ENCODE measurements at regions of chr10 and their contacts with region 1.

Region 1: GRCh38 chr10:86936661-86937501 is 20.5 kb downstream of the MMRN2 start:
- DNase-seq: peak in 1 of 35 experiments; percentile 21
- ATAC-seq: no peak
- H3K4me3 ChIP-seq: no peak overlapping the region
- H3K4me3 Mint-ChIP-seq: no peak overlapping the region
- H3K27ac ChIP-seq: no peak overlapping the region
- H3K27ac Mint-ChIP-seq: no peak overlapping the region
- H3K4me1 ChIP-seq: peaks cover 0 to 8% of the 10 kb centered on the region in 2 experiments
- H3K4me1 Mint-ChIP-seq: peaks cover 0 to 2% (median 2%) of the 10 kb centered on the region in 3 donors
- H3K27me3 ChIP-seq: peaks cover 0 to 3% of the 10 kb centered on the region in 2 experiments
- H3K27me3 Mint-ChIP-seq: no peaks in the 10 kb centered on the region

Region 2: GRCh38 chr10:85557077-85557476 is 1379.8 kb before region 1 on chr10:
- CTCF ChIA-PET with region 1: no interaction called
- POLR2A ChIA-PET with region 1: no interaction called
- DNase-seq: no peak
- ATAC-seq: no peak
- H3K4me3 ChIP-seq: no peak overlapping the region
- H3K4me3 Mint-ChIP-seq: no peak overlapping the region
- H3K27ac ChIP-seq: no peak overlapping the region
- H3K27ac Mint-ChIP-seq: no peak overlapping the region
- H3K4me1 ChIP-seq: no peaks in the 10 kb centered on the region
- H3K4me1 Mint-ChIP-seq: no peaks in the 10 kb centered on the region
- H3K27me3 ChIP-seq: no peaks in the 10 kb centered on the region
- H3K27me3 Mint-ChIP-seq: no peaks in the 10 kb centered on the region

Region 3: DNA sequence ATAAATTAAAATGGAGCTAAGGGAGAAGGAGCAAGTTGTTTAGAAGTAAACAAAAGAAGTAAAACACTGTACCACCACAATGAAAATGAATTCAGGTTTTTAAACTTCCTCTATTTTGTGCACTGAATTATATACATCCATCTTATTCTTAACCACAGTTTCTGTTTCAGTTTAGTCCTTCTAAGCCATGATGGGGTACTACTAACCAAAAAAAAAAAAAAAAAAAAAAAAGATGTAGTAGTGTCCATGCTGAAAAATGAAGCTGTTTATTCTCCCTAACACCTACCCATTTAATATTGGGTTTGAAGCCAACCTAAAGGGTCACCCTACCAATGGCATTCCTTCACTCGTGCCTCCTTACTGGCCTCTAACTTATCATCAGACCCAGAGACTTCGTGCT is 183.8 kb before region 1 on chr10:
- CTCF ChIA-PET with region 1: interaction called, 4 to 12 read pairs
- POLR2A ChIA-PET with region 1: no interaction called
- DNase-seq: no peak
- ATAC-seq: no peak
- H3K4me3 ChIP-seq: no peak overlapping the region
- H3K4me3 Mint-ChIP-seq: no peak overlapping the region
- H3K27ac ChIP-seq: no peak overlapping the region
- H3K27ac Mint-ChIP-seq: no peak overlapping the region
- H3K4me1 ChIP-seq: peaks cover 0 to 11% of the 10 kb centered on the region in 2 experiments
- H3K4me1 Mint-ChIP-seq: peaks cover 13 to 14% (median 13%) of the 10 kb centered on the region in 3 donors
- H3K27me3 ChIP-seq: peaks cover 3 to 10% of the 10 kb centered on the region in 2 experiments
- H3K27me3 Mint-ChIP-seq: peaks cover 0 to 4% of the 10 kb centered on the region in 2 donors

Region 4: GRCh38 chr10:86878983-86879713 is 57.7 kb before region 1 on chr10:
- CTCF ChIA-PET with region 1: no interaction called
- POLR2A ChIA-PET with region 1: no interaction called
- DNase-seq: no peak
- ATAC-seq: no peak
- H3K4me3 ChIP-seq: no peak overlapping the region
- H3K4me3 Mint-ChIP-seq: no peak overlapping the region
- H3K27ac ChIP-seq: no peak overlapping the region
- H3K27ac Mint-ChIP-seq: peak overlapping the region in 1 of 2 donors; percentile 32
- H3K4me1 ChIP-seq: no peaks in the 10 kb centered on the region
- H3K4me1 Mint-ChIP-seq: peaks cover 0 to 3% (median 3%) of the 10 kb centered on the region in 3 donors
- H3K27me3 ChIP-seq: no peaks in the 10 kb centered on the region
- H3K27me3 Mint-ChIP-seq: no peaks in the 10 kb centered on the region

Region 5: DNA sequence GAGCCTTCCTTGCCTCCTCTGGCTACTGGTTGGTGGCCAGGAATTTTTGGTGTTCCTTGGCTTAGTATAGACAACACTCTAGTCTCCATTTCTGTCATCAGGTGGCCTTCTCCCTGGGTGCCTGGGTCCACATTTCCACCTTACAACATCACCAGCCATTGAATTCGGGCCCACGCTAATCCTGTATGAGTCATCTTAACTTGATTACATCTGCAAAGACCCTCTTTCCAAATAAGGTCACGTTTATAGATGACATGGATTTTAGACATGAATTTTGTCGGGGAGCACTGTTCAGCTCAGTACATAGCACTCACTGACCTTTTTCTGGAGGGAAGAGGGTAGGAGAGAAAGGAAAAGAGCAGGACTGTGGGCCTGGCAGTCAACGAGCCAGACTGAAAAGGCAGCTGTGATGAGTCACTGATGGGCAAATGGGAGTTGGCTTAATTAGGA is 18.8 kb before region 1 on chr10:
- CTCF ChIA-PET with region 1: interaction called in 1 of 2 experiments, 10 read pairs
- POLR2A ChIA-PET with region 1: no interaction called
- DNase-seq: no peak
- ATAC-seq: no peak
- H3K4me3 ChIP-seq: no peak overlapping the region
- H3K4me3 Mint-ChIP-seq: no peak overlapping the region
- H3K27ac ChIP-seq: no peak overlapping the region
- H3K27ac Mint-ChIP-seq: no peak overlapping the region
- H3K4me1 ChIP-seq: no peaks in the 10 kb centered on the region
- H3K4me1 Mint-ChIP-seq: no peaks in the 10 kb centered on the region
- H3K27me3 ChIP-seq: no peaks in the 10 kb centered on the region
- H3K27me3 Mint-ChIP-seq: no peaks in the 10 kb centered on the region

Region 6: DNA sequence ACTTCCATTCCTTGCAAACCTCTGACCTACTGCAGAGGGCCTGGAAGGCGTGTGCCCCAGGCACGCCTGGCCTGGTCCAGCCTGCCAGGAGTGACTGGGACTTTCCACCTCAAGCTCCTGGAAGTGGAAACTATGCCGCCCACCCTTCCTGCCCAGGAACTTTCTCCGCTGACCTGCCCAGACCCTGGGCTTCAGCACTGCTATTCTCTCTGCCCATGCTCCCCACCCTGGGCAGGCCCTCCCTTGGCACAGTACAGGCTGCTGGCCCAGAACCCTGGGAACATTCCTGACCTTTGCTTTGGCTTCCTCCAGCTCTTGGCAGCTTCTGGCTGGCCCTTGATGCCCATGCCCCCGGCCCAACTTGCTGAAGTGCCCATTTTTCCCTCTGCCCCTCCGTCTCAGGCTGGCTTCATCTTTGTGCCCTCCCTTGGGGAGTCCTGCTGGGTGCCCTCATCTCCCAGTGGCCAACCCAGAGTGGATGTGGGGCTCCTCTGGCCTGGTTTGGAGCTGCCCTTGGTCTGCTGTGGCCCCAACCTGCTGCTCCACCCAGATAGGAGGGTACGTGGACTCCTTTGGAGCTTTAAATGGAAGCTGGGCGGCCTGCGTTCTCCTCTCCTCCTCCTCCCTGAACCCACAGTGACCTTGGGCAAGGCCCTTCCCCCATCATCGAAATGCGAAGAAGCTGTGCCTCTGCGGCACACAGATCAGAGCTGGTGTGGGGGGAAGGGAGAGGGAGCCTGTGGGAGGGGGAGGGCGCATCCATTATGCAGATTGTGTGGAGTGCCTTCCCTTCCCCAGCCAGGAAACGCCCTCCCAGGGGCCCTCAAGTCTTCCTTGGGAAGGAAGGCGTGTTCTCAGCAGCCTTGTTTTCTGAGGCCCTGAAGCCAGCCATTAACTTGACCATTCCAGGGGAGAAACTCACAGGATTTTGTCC is 17.1 kb after region 1 on chr10:
- CTCF ChIA-PET with region 1: interaction called, 8 to 10 read pairs
- POLR2A ChIA-PET with region 1: no interaction called
- DNase-seq: no peak
- ATAC-seq: no peak
- H3K4me3 ChIP-seq: no peak overlapping the region
- H3K4me3 Mint-ChIP-seq: no peak overlapping the region
- H3K27ac ChIP-seq: no peak overlapping the region
- H3K27ac Mint-ChIP-seq: no peak overlapping the region
- H3K4me1 ChIP-seq: peaks cover 14 to 37% of the 10 kb centered on the region in 2 experiments
- H3K4me1 Mint-ChIP-seq: peaks cover 9 to 25% (median 19%) of the 10 kb centered on the region in 3 donors
- H3K27me3 ChIP-seq: peaks cover 0 to 3% of the 10 kb centered on the region in 2 experiments
- H3K27me3 Mint-ChIP-seq: no peaks in the 10 kb centered on the region

Region 7: GRCh38 chr10:86965986-86966654 is 29.2 kb after region 1 on chr10:
- CTCF ChIA-PET with region 1: interaction called, 8 to 11 read pairs
- POLR2A ChIA-PET with region 1: no interaction called
- DNase-seq: peak in 1 of 35 experiments; percentile 18
- ATAC-seq: peak in 1 of 4 experiments; percentile 9
- H3K4me3 ChIP-seq: peak overlapping the region in 1 of 2 donors; percentile 2
- H3K4me3 Mint-ChIP-seq: peak overlapping the region; percentile 43 to 69 (median 67)
- H3K27ac ChIP-seq: peak overlapping the region; percentile 31
- H3K27ac Mint-ChIP-seq: peak overlapping the region; percentile 66 to 75
- H3K4me1 ChIP-seq: peaks cover 7 to 61% of the 10 kb centered on the region in 2 experiments
- H3K4me1 Mint-ChIP-seq: peaks cover 26 to 48% (median 39%) of the 10 kb centered on the region in 3 donors
- H3K27me3 ChIP-seq: peaks cover 4 to 35% of the 10 kb centered on the region in 2 experiments
- H3K27me3 Mint-ChIP-seq: no peaks in the 10 kb centered on the region

Region 8: GRCh38 chr10:87054373-87055295 is 117.8 kb after region 1 on chr10:
- CTCF ChIA-PET with region 1: interaction called in 1 of 2 experiments, 21 read pairs
- POLR2A ChIA-PET with region 1: no interaction called
- DNase-seq: no peak
- ATAC-seq: no peak
- H3K4me3 ChIP-seq: no peak overlapping the region
- H3K4me3 Mint-ChIP-seq: no peak overlapping the region
- H3K27ac ChIP-seq: no peak overlapping the region
- H3K27ac Mint-ChIP-seq: no peak overlapping the region
- H3K4me1 ChIP-seq: no peaks in the 10 kb centered on the region
- H3K4me1 Mint-ChIP-seq: no peaks in the 10 kb centered on the region
- H3K27me3 ChIP-seq: no peaks in the 10 kb centered on the region
- H3K27me3 Mint-ChIP-seq: no peaks in the 10 kb centered on the region